ENCODE measurements at regions of chr10 and their contacts with region 1.

Region 1: GRCh38 chr10:8238986-8239385 is 184.5 kb downstream of the GATA3 start:
- DNase-seq: no peak
- ATAC-seq: no peak
- H3K4me3 ChIP-seq: no peak overlapping the region
- H3K27ac ChIP-seq: no peak overlapping the region
- H3K4me1 ChIP-seq: no peaks in the 10 kb centered on the region
- H3K27me3 ChIP-seq: no peaks in the 10 kb centered on the region
- CTCF ChIP-seq: no peak

Region 2: GRCh38 chr10:7700577-7701125 is 538.3 kb before region 1 on chr10:
- intact Hi-C with region 1: loop called in 1 of 2 experiments (anchors 10 kb)
- DNase-seq: no peak
- ATAC-seq: no peak
- H3K4me3 ChIP-seq: no peak overlapping the region
- H3K27ac ChIP-seq: no peak overlapping the region
- H3K4me1 ChIP-seq: no peaks in the 10 kb centered on the region
- H3K27me3 ChIP-seq: peaks cover 1 to 17% (median 6%) of the 10 kb centered on the region in 3 donors
- CTCF ChIP-seq: no peak

Region 3: GRCh38 chr10:7969623-7970022 is 269.4 kb before region 1 on chr10:
- intact Hi-C with region 1: no loop called
- DNase-seq: no peak
- ATAC-seq: no peak
- H3K4me3 ChIP-seq: no peak overlapping the region
- H3K27ac ChIP-seq: no peak overlapping the region
- H3K4me1 ChIP-seq: no peaks in the 10 kb centered on the region
- H3K27me3 ChIP-seq: no peaks in the 10 kb centered on the region
- CTCF ChIP-seq: no peak

Region 4: GRCh38 chr10:8017277-8017676 is 221.7 kb before region 1 on chr10:
- intact Hi-C with region 1: no loop called
- DNase-seq: no peak
- ATAC-seq: no peak
- H3K4me3 ChIP-seq: no peak overlapping the region
- H3K27ac ChIP-seq: no peak overlapping the region
- H3K4me1 ChIP-seq: no peaks in the 10 kb centered on the region
- H3K27me3 ChIP-seq: no peaks in the 10 kb centered on the region
- CTCF ChIP-seq: no peak

Region 5: GRCh38 chr10:8392216-8392615 is 153.2 kb after region 1 on chr10:
- intact Hi-C with region 1: no loop called
- DNase-seq: no peak
- ATAC-seq: no peak
- H3K4me3 ChIP-seq: no peak overlapping the region
- H3K27ac ChIP-seq: no peak overlapping the region
- H3K4me1 ChIP-seq: no peaks in the 10 kb centered on the region
- H3K27me3 ChIP-seq: peaks cover 0 to 2% (median 2%) of the 10 kb centered on the region in 3 donors
- CTCF ChIP-seq: no peak

Measured in psoas muscle (tissue), 8 donors.